MCF 10A (cell line): ENCODE measurements at regions of chr3 and their contacts with region 1.

Region 1: DNA sequence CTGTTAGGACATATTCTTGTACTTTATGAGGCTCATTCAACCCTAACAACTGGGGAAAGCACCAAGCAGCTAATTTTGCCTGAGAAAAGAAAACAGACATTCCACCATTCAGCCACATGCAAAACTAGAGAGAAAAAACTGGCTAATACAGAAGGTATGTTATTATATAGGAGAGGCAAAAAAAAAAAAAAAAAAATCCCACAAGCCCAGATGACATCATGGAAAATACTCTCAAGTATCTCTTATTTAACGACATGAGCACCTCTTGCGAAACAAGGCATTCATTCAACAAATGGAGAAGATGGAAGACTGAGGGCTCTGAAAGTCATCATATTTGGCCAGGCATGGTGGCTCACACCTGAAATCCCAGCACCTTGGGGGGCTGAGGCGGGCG is 61.5 kb downstream of the PRICKLE2 start:
- DNase-seq: peak; percentile 85
- H3K4me3 Mint-ChIP-seq: peak overlapping the region; percentile 25
- H3K27ac Mint-ChIP-seq: peak overlapping the region; percentile 87
- H3K4me1 Mint-ChIP-seq: peaks cover 48% of the 10 kb centered on the region
- H3K27me3 Mint-ChIP-seq: no peaks in the 10 kb centered on the region
- CTCF ChIP-seq: no peak

Region 2: DNA sequence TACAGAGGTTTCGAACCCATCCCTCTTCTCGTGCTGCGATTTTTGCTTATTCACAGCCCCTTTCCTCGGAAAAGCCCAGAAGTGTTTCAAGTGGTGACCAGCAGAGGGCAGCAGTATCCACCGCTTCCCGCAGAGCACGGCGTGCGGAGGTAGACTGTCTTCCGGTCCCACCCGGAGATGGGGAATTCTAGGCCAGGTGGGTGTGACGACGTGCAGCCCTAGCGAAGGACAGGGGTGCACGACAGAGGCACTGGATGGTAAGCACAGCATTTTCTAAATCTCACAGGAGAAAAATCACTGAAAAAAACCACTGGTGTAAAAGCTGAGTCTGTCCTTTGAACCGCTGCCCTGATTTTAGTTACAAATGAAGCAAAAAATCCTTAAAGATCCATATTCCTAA is 133.0 kb before region 1 on chr3:
- CTCF ChIA-PET with region 1: interaction called, 5 read pairs
- POLR2A ChIA-PET with region 1: no interaction called
- intact Hi-C with region 1: loop called (anchors 5 kb)
- DNase-seq: peak; percentile 75
- H3K4me3 Mint-ChIP-seq: peak overlapping the region; percentile 65
- H3K27ac Mint-ChIP-seq: no peak overlapping the region
- H3K4me1 Mint-ChIP-seq: peaks cover 8% of the 10 kb centered on the region
- H3K27me3 Mint-ChIP-seq: peaks cover 30% of the 10 kb centered on the region
- CTCF ChIP-seq: peak; percentile 86

Region 3: GRCh38 chr3:64152086-64152485 is 11.7 kb before region 1 on chr3:
- CTCF ChIA-PET with region 1: interaction called, 3 read pairs
- POLR2A ChIA-PET with region 1: interaction called, 25 read pairs
- intact Hi-C with region 1: no loop called
- DNase-seq: peak; percentile 97
- H3K4me3 Mint-ChIP-seq: no peak overlapping the region
- H3K27ac Mint-ChIP-seq: peak overlapping the region; percentile 43
- H3K4me1 Mint-ChIP-seq: peaks cover 21% of the 10 kb centered on the region
- H3K27me3 Mint-ChIP-seq: no peaks in the 10 kb centered on the region
- CTCF ChIP-seq: no peak

Region 4: GRCh38 chr3:64176461-64176996 is 12.8 kb after region 1 on chr3:
- CTCF ChIA-PET with region 1: interaction called, 5 read pairs
- POLR2A ChIA-PET with region 1: interaction called, 14 read pairs
- intact Hi-C with region 1: no loop called
- DNase-seq: no peak
- H3K4me3 Mint-ChIP-seq: peak overlapping the region; percentile 18
- H3K27ac Mint-ChIP-seq: peak overlapping the region; percentile 91
- H3K4me1 Mint-ChIP-seq: peaks cover 24% of the 10 kb centered on the region
- H3K27me3 Mint-ChIP-seq: no peaks in the 10 kb centered on the region
- CTCF ChIP-seq: no peak

Region 5: GRCh38 chr3:64187065-64187959 is 23.6 kb after region 1 on chr3:
- CTCF ChIA-PET with region 1: interaction called, 23 read pairs
- POLR2A ChIA-PET with region 1: interaction called, 51 read pairs
- intact Hi-C with region 1: no loop called
- DNase-seq: peak; percentile 93
- H3K4me3 Mint-ChIP-seq: peak overlapping the region; percentile 62
- H3K27ac Mint-ChIP-seq: peak overlapping the region; percentile 83
- H3K4me1 Mint-ChIP-seq: peaks cover 66% of the 10 kb centered on the region
- H3K27me3 Mint-ChIP-seq: no peaks in the 10 kb centered on the region
- CTCF ChIP-seq: no peak

Region 6: GRCh38 chr3:64213962-64214379 is 50.2 kb after region 1 on chr3:
- CTCF ChIA-PET with region 1: no interaction called
- POLR2A ChIA-PET with region 1: interaction called, 11 read pairs
- intact Hi-C with region 1: no loop called
- DNase-seq: peak; percentile 91
- H3K4me3 Mint-ChIP-seq: peak overlapping the region; percentile 55
- H3K27ac Mint-ChIP-seq: peak overlapping the region; percentile 56
- H3K4me1 Mint-ChIP-seq: peaks cover 21% of the 10 kb centered on the region
- H3K27me3 Mint-ChIP-seq: no peaks in the 10 kb centered on the region
- CTCF ChIP-seq: no peak

Region 7: GRCh38 chr3:64399205-64399800 is 235.6 kb after region 1 on chr3:
- CTCF ChIA-PET with region 1: interaction called, 5 read pairs
- POLR2A ChIA-PET with region 1: no interaction called
- intact Hi-C with region 1: loop called (anchors 5 kb)
- DNase-seq: peak; percentile 78
- H3K4me3 Mint-ChIP-seq: no peak overlapping the region
- H3K27ac Mint-ChIP-seq: no peak overlapping the region
- H3K4me1 Mint-ChIP-seq: no peaks in the 10 kb centered on the region
- H3K27me3 Mint-ChIP-seq: no peaks in the 10 kb centered on the region
- CTCF ChIP-seq: peak; percentile 83